PC-3 (cell line): ENCODE measurements at regions of chr1 and their contacts with region 1.

Region 1: GRCh38 chr1:239250353-239251035 is 135.9 kb upstream of the CHRM3 start:
- DNase-seq: peak; percentile 98
- ATAC-seq: peak; percentile 97
- H3K4me3 ChIP-seq: no peak overlapping the region
- H3K27ac ChIP-seq: peak overlapping the region; percentile 92
- H3K4me1 ChIP-seq: peaks cover 40% of the 10 kb centered on the region
- H3K27me3 ChIP-seq: no peaks in the 10 kb centered on the region
- CTCF ChIP-seq: no peak

Region 2: GRCh38 chr1:238898856-238899255 is 351.6 kb before region 1 on chr1:
- CTCF ChIA-PET with region 1: no interaction called
- POLR2A ChIA-PET with region 1: no interaction called
- intact Hi-C with region 1: no loop called
- DNase-seq: peak; percentile 72
- ATAC-seq: peak; percentile 61
- H3K4me3 ChIP-seq: no peak overlapping the region
- H3K27ac ChIP-seq: no peak overlapping the region
- H3K4me1 ChIP-seq: peaks cover 24% of the 10 kb centered on the region
- H3K27me3 ChIP-seq: no peaks in the 10 kb centered on the region
- CTCF ChIP-seq: no peak

Region 3: DNA sequence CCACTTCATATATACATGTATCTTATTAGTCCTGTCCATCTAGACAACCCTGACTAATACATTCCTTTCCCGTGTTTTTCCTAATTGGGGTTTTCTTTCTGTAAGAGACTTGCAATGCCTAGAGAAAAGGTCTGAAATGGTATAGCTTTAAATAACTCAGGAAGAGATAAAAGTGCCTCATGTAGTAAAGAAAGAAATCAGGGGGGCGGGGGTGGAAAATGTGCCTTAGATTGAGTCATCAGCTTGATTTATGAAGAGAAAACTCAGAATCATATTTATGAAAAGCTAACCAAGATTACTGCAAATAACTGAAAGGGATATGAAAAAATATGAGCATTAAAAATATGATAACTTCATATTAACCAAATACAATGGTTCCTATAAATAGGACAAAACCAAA is 210.0 kb before region 1 on chr1:
- CTCF ChIA-PET with region 1: no interaction called
- POLR2A ChIA-PET with region 1: no interaction called
- intact Hi-C with region 1: loop called (anchors 5 kb)
- DNase-seq: no peak
- ATAC-seq: peak; percentile 50
- H3K4me3 ChIP-seq: no peak overlapping the region
- H3K27ac ChIP-seq: no peak overlapping the region
- H3K4me1 ChIP-seq: no peaks in the 10 kb centered on the region
- H3K27me3 ChIP-seq: no peaks in the 10 kb centered on the region
- CTCF ChIP-seq: no peak

Region 4: GRCh38 chr1:239178961-239179360 is 71.5 kb before region 1 on chr1:
- CTCF ChIA-PET with region 1: no interaction called
- POLR2A ChIA-PET with region 1: no interaction called
- intact Hi-C with region 1: no loop called
- DNase-seq: no peak
- ATAC-seq: no peak
- H3K4me3 ChIP-seq: no peak overlapping the region
- H3K27ac ChIP-seq: no peak overlapping the region
- H3K4me1 ChIP-seq: no peaks in the 10 kb centered on the region
- H3K27me3 ChIP-seq: no peaks in the 10 kb centered on the region
- CTCF ChIP-seq: no peak

Region 5: DNA sequence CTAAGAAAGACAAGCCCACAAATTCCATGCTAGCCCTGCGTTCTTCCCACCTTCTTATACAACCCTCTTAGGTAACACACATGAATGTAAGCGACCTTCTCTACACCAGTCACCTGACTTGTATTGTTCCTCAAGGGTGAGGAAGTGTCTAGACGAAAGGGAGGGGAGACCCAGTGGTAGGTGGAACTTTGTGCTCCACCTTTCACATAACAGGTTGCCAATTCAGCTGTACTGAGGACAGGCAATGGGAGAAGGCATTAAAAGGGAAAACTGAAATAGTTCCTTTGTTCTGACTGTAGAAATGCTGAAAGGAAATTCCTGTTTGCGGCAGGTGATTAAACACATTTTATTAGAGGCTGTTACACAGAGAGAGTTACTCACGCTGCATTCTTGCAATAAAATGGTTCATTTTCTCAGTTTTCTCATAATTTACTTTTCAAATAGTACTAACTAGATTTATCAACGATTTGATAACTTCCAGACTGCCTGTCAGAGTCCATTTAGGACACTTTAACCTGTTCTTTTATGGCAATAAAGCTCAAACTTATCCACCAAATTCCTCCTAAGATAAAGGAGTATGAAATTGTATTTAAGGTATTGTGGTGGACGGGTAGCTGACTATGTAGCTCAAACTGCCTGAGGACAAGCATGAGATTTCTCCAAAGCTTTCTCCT is 118.1 kb after region 1 on chr1:
- CTCF ChIA-PET with region 1: no interaction called
- POLR2A ChIA-PET with region 1: no interaction called
- intact Hi-C with region 1: loop called (anchors 5 kb)
- DNase-seq: peak; percentile 78
- ATAC-seq: peak; percentile 97
- H3K4me3 ChIP-seq: peak overlapping the region; percentile 14; the same call in 1 of the 2 replicates
- H3K27ac ChIP-seq: 0 out of 2 replicates have a peak overlapping the region, but pooled peaks have one; percentile 10
- H3K4me1 ChIP-seq: peaks cover 17% of the 10 kb centered on the region; the same call in 1 of the 2 replicates
- H3K27me3 ChIP-seq: no peaks in the 10 kb centered on the region
- CTCF ChIP-seq: no peak

Region 6: DNA sequence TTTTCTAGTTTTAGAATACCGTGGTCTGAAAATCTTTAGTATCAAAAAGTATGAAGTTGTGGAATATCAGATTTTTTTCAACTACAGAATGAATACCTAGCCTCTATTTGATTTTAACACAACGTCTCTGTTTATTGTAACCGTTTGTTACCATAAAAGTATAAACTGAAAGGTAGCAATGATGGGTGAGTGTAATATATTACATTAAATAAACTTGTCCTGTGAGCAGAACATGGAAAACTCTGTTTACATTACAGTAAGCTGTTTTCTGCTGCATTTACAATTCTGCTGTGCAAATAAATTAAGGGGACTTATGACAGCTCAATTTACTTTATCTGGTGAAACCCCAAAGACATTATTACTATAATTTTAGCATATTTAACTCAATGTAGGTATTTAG is 198.4 kb after region 1 on chr1:
- CTCF ChIA-PET with region 1: no interaction called
- POLR2A ChIA-PET with region 1: no interaction called
- intact Hi-C with region 1: loop called (anchors 5 kb)
- DNase-seq: no peak
- ATAC-seq: peak; percentile 12; the same call in 1 of the 2 replicates
- H3K4me3 ChIP-seq: no peak overlapping the region
- H3K27ac ChIP-seq: no peak overlapping the region
- H3K4me1 ChIP-seq: peaks cover 28% of the 10 kb centered on the region
- H3K27me3 ChIP-seq: no peaks in the 10 kb centered on the region
- CTCF ChIP-seq: no peak

Region 7: DNA sequence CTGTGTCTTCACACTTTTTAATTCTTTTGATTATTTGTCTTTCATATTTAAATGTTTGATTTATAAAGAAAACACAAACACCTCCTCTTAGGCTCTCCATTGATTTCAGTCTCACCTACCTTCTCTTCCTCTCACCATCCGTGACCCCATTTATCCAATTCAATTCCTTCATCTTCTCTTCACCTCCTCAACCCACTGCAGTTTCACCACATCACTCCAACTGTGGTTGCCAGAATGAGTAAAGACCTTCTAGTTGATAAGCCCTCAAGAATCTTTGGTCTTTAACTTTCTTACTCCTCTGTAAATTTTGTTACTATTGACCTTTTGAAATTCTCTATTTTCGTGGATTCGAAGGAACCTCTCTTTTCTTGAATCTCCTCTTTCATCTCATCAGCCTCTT is 396.6 kb after region 1 on chr1:
- CTCF ChIA-PET with region 1: no interaction called
- POLR2A ChIA-PET with region 1: no interaction called
- intact Hi-C with region 1: no loop called
- DNase-seq: no peak
- ATAC-seq: no peak
- H3K4me3 ChIP-seq: no peak overlapping the region
- H3K27ac ChIP-seq: no peak overlapping the region
- H3K4me1 ChIP-seq: no peaks in the 10 kb centered on the region
- H3K27me3 ChIP-seq: no peaks in the 10 kb centered on the region
- CTCF ChIP-seq: no peak

Region 8: DNA sequence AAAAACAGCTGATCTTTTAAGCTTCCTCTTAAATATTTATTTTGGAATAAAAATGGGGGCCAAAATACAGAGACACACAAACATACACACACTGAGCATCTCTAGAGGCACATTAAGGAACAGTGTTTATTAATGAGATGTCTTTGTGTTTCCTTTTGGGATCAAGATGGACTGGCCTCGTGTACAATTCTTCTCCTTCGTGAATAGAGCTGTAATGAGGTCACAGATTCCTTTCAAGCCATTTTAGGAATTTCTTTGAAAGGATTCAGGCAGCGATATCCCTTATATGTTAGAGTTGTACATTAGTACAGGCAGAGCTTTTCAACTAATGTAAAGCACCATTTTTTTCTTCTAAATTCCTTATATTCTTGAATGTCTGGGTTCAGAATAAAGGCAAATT is 431.6 kb after region 1 on chr1:
- CTCF ChIA-PET with region 1: no interaction called
- POLR2A ChIA-PET with region 1: no interaction called
- intact Hi-C with region 1: loop called (anchors 10 kb)
- DNase-seq: no peak
- ATAC-seq: no peak
- H3K4me3 ChIP-seq: no peak overlapping the region
- H3K27ac ChIP-seq: peak overlapping the region; percentile 57
- H3K4me1 ChIP-seq: peaks cover 30% of the 10 kb centered on the region
- H3K27me3 ChIP-seq: no peaks in the 10 kb centered on the region
- CTCF ChIP-seq: no peak